Right lobe of liver (tissue), 6 donors: ENCODE measurements at regions of chr15 and their contacts with region 1.

Region 1: GRCh38 chr15:68304589-68305337 is 27.2 kb downstream of the FEM1B start:
- DNase-seq: peak in 1 of 3 donors; percentile 37
- ATAC-seq: no peak
- H3K4me3 ChIP-seq: no peak overlapping the region
- H3K27ac ChIP-seq: no peak overlapping the region
- H3K4me1 ChIP-seq: peaks cover 0 to 18% (median 3%) of the 10 kb centered on the region in 4 donors
- H3K27me3 ChIP-seq: no peaks in the 10 kb centered on the region
- CTCF ChIP-seq: no peak
- POLR2A ChIP-seq: no peak

Region 2: GRCh38 chr15:68252925-68253534 is 51.7 kb before region 1 on chr15:
- intact Hi-C with region 1: loop called in 1 of 2 experiments (anchors 10 kb)
- DNase-seq: no peak
- ATAC-seq: peak; percentile 58 to 72 (median 69)
- H3K4me3 ChIP-seq: no peak overlapping the region
- H3K27ac ChIP-seq: no peak overlapping the region
- H3K4me1 ChIP-seq: peaks cover 0 to 6% (median 0%) of the 10 kb centered on the region in 4 donors
- H3K27me3 ChIP-seq: no peaks in the 10 kb centered on the region
- CTCF ChIP-seq: peak; percentile 89 to 96 (median 92)
- POLR2A ChIP-seq: no peak

Region 3: DNA sequence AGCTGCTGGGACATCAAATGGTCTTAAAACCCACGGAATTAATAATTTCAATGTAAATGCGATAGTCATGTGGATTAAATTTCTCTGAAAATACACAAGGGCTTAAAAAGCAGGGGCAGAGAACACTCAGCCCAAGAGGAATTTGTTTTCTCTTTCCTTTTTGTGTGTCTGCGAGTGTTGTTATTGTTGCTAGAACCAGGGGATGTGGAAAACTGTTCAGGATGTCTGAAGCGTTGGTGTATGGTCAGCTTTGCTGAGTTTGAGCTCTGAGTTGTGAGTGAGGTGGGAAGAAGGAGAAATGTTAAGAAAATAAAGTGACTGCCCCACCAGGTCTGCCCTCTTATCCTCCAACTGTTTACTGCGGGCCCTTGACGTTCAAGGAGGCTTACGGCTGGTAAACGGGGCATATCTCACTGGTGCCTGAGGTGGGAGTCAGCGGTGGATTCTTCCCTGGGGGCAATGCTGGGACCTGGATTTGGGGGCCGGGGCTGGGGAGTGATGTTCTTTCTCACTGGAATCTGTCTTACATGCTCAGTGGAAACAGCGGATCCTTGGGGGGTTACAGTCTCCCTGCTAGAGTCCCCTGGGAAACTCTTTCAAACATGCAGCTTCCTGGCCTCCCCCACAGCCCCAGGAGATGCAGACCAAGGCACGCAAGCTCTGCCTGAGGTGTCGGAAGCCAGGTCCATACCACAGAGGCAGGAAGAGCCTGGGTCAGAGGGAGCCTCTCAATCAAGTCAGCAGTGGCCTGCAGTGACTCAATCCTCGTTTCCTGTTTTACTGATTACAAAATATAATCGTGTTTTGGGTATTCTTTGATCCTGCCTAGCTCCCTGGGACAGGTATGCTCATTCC is 85.4 kb after region 1 on chr15:
- intact Hi-C with region 1: loop called in 1 of 2 experiments (anchors 5 kb)
- DNase-seq: peak in 2 of 3 donors; percentile 28 to 34
- ATAC-seq: peak; percentile 38 to 90 (median 60)
- H3K4me3 ChIP-seq: no peak overlapping the region
- H3K27ac ChIP-seq: no peak overlapping the region
- H3K4me1 ChIP-seq: no peaks in the 10 kb centered on the region
- H3K27me3 ChIP-seq: no peaks in the 10 kb centered on the region
- CTCF ChIP-seq: no peak
- POLR2A ChIP-seq: no peak